H1 (cell line): ENCODE measurements at regions of chr12 and their contacts with region 1.

Region 1: GRCh38 chr12:26113853-26114719 is 10.8 kb downstream of the BHLHE41 start:
- DNase-seq: peak; percentile 63 to 89
- H3K4me3 ChIP-seq: peak overlapping the region; percentile 42 to 78 (median 54)
- H3K27ac ChIP-seq: peak overlapping the region; percentile 65; the same call in 1 of the 2 replicates
- H3K4me1 ChIP-seq: peaks cover 0 to 15% (median 14%) of the 10 kb centered on the region in 4 experiments; a peak in 4 of 7 replicates
- H3K27me3 ChIP-seq: peaks cover 0 to 16% (median 15%) of the 10 kb centered on the region in 4 experiments; a peak in 6 of 7 replicates
- CTCF ChIP-seq: peak; percentile 5 to 32 (median 28); a peak in 3 of 4 replicates
- EP300 ChIP-seq: peak in 1 of 2 experiments; percentile 5; a peak in 1 of 3 replicates
- POLR2A ChIP-seq: peak in 1 of 2 experiments; percentile 46; a peak in 2 of 3 replicates
- RAD21 ChIP-seq: peak in 1 of 2 experiments; percentile 9; a peak in 1 of 4 replicates

Region 2: DNA sequence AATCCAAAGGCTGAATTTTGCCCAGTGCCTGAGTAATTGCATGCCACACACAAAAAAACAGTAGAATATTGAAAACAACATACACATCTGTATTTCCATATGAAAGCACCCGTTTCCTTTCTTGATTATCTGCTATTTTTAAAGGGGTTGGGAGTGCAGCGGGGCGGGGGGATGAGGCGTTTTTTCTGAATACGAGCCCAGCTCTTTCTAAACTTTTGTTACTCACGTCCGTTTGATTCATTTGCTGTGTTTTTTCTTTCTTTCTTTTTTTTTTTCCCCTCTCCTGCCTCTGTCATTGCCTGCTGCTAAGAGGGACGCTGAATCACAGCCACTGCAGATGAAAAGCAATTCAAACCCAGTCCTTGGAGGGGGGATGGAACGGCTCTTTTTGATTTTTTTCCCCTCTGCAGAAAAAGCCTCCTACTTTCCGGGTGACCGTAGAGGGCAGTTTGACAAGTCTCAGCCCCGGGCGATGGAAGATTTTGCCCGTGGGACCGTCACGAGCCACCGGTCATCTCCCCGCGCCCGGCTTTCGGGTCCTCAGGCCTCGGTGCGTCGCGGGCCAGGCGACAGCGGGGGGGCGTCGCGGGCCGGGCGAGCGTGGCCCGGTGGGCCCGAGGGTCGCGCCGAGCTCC is 156.2 kb before region 1 on chr12:
- CTCF ChIA-PET with region 1: no interaction called
- POLR2A ChIA-PET with region 1: no interaction called
- DNase-seq: no peak
- H3K4me3 ChIP-seq: peak overlapping the region; percentile 50 to 98 (median 64)
- H3K27ac ChIP-seq: no peak overlapping the region; the same call in 1 of the 2 replicates
- H3K4me1 ChIP-seq: peaks cover 0 to 4% (median 2%) of the 10 kb centered on the region in 4 experiments; a peak in 4 of 7 replicates
- H3K27me3 ChIP-seq: peaks cover 0 to 1% (median 0%) of the 10 kb centered on the region in 4 experiments; a peak in 1 of 7 replicates
- CTCF ChIP-seq: no peak
- EP300 ChIP-seq: no peak
- POLR2A ChIP-seq: no peak
- RAD21 ChIP-seq: no peak

Region 3: DNA sequence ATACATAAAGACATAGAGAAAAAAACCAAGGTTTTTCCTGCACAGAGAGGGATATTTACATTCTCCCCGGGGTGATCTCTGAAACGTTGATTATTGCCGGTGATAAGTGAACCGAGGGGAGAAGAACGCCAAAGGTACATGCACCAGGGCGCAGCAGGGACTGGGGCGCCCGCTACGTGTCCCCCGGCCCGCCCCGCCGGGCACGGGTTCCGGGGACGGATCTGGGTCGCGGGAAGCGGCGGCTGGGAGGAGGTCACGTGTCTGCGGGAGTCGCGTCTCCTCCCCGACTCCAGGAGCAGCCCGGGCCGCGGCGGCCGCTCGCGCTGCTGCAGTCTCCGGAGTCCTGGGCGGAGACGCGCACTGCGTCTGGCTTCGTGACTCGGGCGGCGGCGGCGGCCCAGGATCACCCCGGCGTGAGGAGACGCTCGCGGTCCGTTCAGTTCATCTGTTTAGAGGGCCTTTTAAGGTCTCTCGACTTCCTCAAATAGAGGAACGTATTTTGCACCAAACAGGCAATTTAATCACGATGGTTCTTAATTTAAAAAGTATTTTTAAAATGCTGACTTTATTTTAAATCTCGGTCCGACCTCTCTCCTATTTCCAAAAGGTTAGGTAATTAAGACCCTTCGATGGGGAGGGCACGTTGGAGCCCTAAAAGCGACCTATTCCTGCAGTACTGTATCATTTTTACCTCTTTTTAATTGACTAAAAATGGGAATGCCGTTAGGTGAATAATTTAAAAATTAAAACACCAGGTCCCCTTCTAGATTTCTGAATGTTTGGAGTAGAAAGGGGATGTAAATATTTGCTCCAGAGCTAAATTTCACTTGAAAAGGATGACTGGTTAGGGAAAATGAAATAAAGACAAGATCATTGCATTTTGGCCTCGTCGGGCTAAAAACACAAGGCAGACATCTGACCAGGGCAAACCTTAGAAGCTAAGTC is 12.5 kb after region 1 on chr12:
- CTCF ChIA-PET with region 1: interaction called, 11 read pairs
- POLR2A ChIA-PET with region 1: interaction called, 42 read pairs
- DNase-seq: peak in 1 of 2 experiments; percentile 85
- H3K4me3 ChIP-seq: peak overlapping the region; percentile 55 to 81 (median 66)
- H3K27ac ChIP-seq: no peak overlapping the region
- H3K4me1 ChIP-seq: peaks cover 0 to 14% (median 8%) of the 10 kb centered on the region in 4 experiments; a peak in 6 of 7 replicates
- H3K27me3 ChIP-seq: peaks cover 43 to 79% (median 63%) of the 10 kb centered on the region in 4 experiments
- CTCF ChIP-seq: no peak
- EP300 ChIP-seq: no peak
- POLR2A ChIP-seq: no peak
- RAD21 ChIP-seq: peak; percentile 2 to 28; a peak in 1 of 4 replicates

Region 4: GRCh38 chr12:26162905-26163304 is 48.8 kb after region 1 on chr12:
- CTCF ChIA-PET with region 1: no interaction called
- POLR2A ChIA-PET with region 1: no interaction called
- DNase-seq: no peak
- H3K4me3 ChIP-seq: no peak overlapping the region
- H3K27ac ChIP-seq: no peak overlapping the region
- H3K4me1 ChIP-seq: no peaks in the 10 kb centered on the region
- H3K27me3 ChIP-seq: no peaks in the 10 kb centered on the region
- CTCF ChIP-seq: no peak
- EP300 ChIP-seq: no peak
- POLR2A ChIP-seq: no peak
- RAD21 ChIP-seq: no peak

Region 5: GRCh38 chr12:26274441-26275312 is 160.6 kb after region 1 on chr12:
- CTCF ChIA-PET with region 1: no interaction called
- POLR2A ChIA-PET with region 1: no interaction called
- DNase-seq: peak in 1 of 2 experiments; percentile 17
- H3K4me3 ChIP-seq: no peak overlapping the region
- H3K27ac ChIP-seq: no peak overlapping the region
- H3K4me1 ChIP-seq: peaks cover 0 to 4% (median 1%) of the 10 kb centered on the region in 4 experiments; a peak in 3 of 7 replicates
- H3K27me3 ChIP-seq: no peaks in the 10 kb centered on the region
- CTCF ChIP-seq: no peak
- EP300 ChIP-seq: no peak
- POLR2A ChIP-seq: no peak
- RAD21 ChIP-seq: peak; percentile 31 to 37